OCI-LY7 (cell line): ENCODE measurements at regions of chr5 and their contacts with region 1.

Region 1: GRCh38 chr5:95261437-95262175 is 23.3 kb downstream of the MCTP1 start:
- DNase-seq: no peak
- H3K4me3 ChIP-seq: no peak overlapping the region
- H3K27ac ChIP-seq: no peak overlapping the region
- H3K4me1 ChIP-seq: no peaks in the 10 kb centered on the region
- CTCF ChIP-seq: peak; percentile 71

Region 2: DNA sequence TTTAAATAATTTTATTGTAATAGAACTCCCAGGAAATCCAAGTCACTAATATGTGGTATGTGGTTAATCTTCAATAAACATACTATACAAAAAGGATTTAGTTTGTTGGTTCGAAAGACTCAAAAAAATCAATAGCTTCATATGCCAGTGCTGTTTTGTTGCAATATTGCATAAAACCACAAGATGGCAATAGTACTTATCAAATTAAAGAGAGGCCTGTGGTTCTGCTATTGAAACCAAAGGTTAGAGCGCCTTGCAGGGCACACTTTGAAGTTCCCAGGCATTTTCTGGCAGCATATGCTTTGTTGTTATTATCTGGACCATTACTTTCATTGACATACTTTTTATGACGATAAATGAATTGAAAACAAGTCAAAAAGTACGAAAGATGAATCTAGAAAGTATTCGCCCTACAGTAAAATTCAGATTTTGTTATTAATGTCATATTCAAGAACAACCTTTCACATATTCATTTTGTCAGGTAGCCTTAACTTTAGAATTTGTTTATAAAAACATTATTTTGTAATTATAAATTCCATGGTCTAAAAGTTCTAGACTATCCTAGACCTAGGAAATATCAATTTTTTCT is 293.0 kb before region 1 on chr5:
- CTCF ChIA-PET with region 1: no interaction called
- POLR2A ChIA-PET with region 1: no interaction called
- intact Hi-C with region 1: loop called (anchors 10 kb)
- DNase-seq: peak; percentile 72
- H3K4me3 ChIP-seq: no peak overlapping the region
- H3K27ac ChIP-seq: no peak overlapping the region
- H3K4me1 ChIP-seq: no peaks in the 10 kb centered on the region
- CTCF ChIP-seq: peak; percentile 89